Upper lobe of right lung (tissue), 1 donor: ENCODE measurements at regions of chr10 and their contacts with region 1.

Region 1: GRCh38 chr10:58291538-58292174 is 22.7 kb downstream of the CISD1 start:
- DNase-seq: no peak
- ATAC-seq: peak; percentile 88
- H3K4me3 ChIP-seq: no peak overlapping the region
- H3K27ac ChIP-seq: no peak overlapping the region
- H3K4me1 ChIP-seq: no peaks in the 10 kb centered on the region
- H3K27me3 ChIP-seq: no peaks in the 10 kb centered on the region
- CTCF ChIP-seq: peak; percentile 72

Region 2: DNA sequence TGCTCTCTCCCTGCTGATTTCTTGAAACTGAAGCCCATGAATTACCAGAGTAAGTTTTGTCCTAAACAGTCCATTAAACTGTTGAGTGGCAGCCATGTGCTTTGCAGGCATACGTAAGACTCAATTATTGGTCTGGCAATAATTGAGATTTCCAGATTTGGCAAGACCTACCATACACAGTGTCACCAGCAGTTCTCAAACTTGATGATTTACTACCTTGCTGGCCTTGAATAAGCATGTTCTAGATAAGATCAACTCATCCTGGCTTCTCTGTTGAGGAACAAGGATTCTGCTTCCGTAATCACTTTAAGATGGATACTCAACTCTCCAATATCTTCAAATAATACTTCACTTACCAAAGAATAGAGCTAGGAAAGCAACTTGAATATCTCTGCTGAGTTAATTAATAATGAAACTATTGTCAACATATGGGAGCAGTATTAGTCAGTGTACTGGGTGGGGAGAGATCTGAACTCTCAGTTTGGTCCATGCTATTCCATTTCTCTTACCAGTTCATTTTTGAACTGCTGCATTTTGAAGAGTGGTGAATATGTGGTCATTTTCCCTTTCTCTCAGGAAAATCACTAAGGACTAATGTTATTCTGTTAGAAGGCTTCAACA is 205.4 kb before region 1 on chr10:
- intact Hi-C with region 1: no loop called
- DNase-seq: no peak
- ATAC-seq: no peak
- H3K4me3 ChIP-seq: no peak overlapping the region
- H3K27ac ChIP-seq: no peak overlapping the region
- H3K4me1 ChIP-seq: no peaks in the 10 kb centered on the region
- H3K27me3 ChIP-seq: no peaks in the 10 kb centered on the region
- CTCF ChIP-seq: no peak

Region 3: GRCh38 chr10:58177362-58177947 is 114.2 kb before region 1 on chr10:
- intact Hi-C with region 1: loop called (anchors 5 kb)
- DNase-seq: no peak
- ATAC-seq: peak; percentile 59
- H3K4me3 ChIP-seq: no peak overlapping the region
- H3K27ac ChIP-seq: no peak overlapping the region
- H3K4me1 ChIP-seq: no peaks in the 10 kb centered on the region
- H3K27me3 ChIP-seq: no peaks in the 10 kb centered on the region
- CTCF ChIP-seq: peak; percentile 69

Region 4: DNA sequence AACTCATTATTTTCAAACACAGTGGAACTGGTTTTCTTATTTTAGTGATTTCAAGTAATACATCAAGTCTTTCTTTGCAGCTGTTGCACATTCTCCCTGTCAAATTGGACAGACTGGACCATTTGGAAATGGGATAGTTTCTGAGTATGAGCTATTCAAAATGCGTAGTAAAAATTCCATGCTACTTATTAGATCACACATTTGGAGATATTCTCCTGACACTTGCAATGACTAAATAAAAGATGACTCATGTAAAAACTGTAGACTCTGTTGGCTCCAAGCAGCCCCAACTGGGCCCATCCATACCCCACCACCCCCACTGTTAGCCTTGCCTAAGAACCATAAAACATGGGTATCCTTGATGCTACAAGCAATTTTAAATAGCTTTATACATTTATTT is 195.2 kb after region 1 on chr10:
- intact Hi-C with region 1: no loop called
- DNase-seq: no peak
- ATAC-seq: no peak
- H3K4me3 ChIP-seq: no peak overlapping the region
- H3K27ac ChIP-seq: no peak overlapping the region
- H3K4me1 ChIP-seq: no peaks in the 10 kb centered on the region
- H3K27me3 ChIP-seq: no peaks in the 10 kb centered on the region
- CTCF ChIP-seq: no peak